HEK293T (cell line): ENCODE measurements at regions of chr15 and their contacts with region 1.

Region 1: DNA sequence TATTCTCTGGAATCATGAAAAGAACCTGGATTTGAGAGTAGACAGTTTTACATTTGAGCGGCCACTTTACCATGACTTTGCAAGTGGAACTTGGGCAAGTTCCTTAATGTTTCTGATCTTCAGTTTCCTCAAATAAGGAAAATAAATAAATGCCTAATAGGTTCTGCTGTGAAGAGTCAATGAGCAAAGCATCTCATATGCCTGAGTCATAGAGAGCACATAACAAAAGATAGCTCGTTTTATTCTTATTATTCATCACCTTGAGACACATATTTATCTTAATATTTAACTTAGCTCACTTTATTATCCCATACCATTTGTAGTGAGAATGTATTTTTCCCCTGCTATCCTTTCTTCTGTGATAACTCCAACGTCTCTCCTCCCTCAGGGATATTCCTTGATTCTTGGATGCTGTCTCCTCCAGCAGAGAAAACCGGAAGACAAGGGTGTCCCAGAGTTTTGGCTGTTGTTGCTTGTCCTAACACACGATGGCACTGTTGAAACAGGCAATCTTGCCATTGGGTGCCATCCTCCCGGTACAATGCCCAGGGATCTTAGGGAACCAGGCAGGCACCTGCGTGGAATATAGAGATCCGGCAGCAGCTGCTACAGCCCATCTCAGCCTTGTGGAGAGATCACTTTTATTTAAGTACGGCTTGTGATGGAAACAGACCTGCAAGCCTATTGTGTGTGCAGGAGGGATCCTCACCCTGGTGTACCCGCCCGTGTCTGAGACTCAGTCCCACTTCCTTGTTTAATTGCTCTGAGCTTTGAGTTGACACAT is 33.3 kb upstream of the VPS33B start:
- DNase-seq: peak; percentile 84

Region 2: GRCh38 chr15:90819850-90820797 is 235.6 kb before region 1 on chr15:
- CTCF ChIA-PET with region 1: no interaction called
- POLR2A ChIA-PET with region 1: no interaction called
- DNase-seq: no peak

Region 3: DNA sequence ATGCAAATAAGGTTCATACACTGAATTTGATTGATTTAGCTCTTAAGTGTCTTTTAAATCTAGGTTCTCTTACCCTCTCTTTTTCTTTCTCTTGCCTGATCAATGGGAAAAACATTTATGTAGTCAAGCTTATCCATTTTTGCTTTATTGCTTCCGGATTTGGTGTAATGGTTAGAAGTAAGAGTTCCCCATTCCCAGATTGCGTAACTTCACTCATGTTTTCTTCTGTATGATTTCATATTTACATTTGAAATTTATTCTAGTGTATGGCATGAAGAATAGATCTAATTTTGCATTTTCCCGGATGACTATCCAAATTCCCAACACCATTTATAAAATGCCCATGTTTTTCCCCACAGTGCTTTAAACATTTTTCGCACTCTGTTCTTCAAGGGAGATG is 16.4 kb after region 1 on chr15:
- CTCF ChIA-PET with region 1: interaction called, 12 read pairs
- POLR2A ChIA-PET with region 1: no interaction called
- DNase-seq: no peak

Region 4: DNA sequence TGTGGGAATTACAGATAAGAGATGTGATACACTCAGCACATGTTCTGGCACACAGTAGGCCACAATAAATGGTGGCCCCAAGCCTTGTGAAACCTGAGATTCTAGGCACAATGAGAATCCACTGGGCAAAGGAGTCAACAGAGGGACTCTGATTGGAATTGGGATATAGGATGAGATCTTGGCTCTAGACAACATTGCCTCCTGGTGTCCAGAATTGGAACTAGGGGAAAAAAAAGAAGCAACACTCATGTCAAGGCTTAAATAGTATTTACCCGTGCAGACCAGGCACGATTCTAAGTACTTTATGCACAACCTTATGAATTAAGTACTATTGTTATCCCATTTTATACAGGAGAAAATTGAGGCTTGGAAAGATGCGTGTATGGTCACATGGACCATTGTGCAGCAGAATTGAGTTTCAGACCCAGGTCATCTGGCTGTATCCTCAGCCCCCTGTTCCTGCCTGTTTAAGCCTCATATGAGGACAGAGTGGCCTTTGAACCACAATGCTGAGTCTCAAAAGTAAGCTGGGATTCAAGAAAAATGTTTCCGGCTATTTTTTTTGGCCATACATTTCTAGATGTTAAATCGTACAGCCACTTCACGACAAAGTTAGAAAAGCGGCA is 169.1 kb after region 1 on chr15:
- CTCF ChIA-PET with region 1: interaction called, 15 read pairs
- POLR2A ChIA-PET with region 1: no interaction called
- DNase-seq: peak; percentile 71

Region 5: DNA sequence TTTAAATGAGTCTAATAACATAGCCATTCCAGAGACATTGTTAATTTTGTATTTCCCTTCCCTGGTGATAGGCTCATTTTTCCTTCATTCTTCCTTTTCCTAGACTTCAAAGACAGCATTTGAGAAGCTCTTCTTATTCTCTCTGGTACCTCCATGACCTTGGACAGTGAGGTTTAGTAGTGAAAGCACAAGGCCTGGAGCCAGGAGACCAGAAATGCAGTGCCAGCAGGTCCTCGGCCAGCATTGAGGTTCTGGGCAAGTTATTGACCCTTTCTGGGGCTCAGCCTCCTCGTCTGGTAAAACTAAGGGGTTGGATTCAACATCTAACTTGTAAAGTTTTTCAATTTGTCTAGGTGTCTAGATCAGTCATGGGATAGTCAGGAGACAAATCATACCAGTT is 191.3 kb after region 1 on chr15:
- CTCF ChIA-PET with region 1: interaction called, 15 read pairs
- POLR2A ChIA-PET with region 1: no interaction called
- DNase-seq: no peak

Region 6: DNA sequence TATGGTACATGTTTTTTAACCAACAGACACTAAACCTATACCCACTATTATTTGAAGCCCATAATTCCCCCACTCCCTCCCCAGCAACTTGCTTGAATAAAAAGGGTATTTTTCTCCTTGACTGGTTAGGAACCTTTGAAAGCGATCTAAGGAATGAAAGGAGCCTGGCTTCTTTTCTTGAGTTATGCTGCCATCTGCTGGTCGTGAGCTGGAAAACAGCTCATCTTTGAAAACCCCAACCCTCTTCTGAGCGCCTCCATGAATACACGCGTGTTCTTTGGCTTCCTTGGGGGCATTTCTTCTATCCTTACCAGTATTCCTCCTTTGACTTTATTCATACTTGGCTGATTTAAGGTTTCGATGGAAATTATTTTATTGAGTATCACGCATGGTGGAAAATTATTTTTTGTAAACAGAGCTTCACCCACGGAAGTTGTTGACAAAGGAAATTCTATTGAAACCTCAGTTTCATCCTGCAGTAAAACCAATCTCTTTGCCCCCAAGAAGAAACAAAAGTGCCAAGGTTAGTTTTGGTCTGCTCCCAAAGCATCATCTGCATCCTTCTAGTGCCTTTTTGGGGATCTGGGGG is 215.9 kb after region 1 on chr15:
- CTCF ChIA-PET with region 1: interaction called, 36 read pairs
- POLR2A ChIA-PET with region 1: no interaction called
- DNase-seq: peak; percentile 64